Endothelial cell of umbilical vein (primary cell): ENCODE measurements at regions of chr19 and their contacts with region 1.

Region 1: GRCh38 chr19:14031719-14032480 is at the start of gene IL27RA:
- DNase-seq: peak; percentile 40
- H3K4me3 ChIP-seq: peak within 1 kb of the TSS; percentile 58 to 67 (median 61)
- H3K27ac ChIP-seq: no peak within 1 kb of the TSS
- H3K4me1 ChIP-seq: peaks cover 6% of the 10 kb centered on the region
- H3K27me3 ChIP-seq: peaks cover 0 to 7% of the 10 kb centered on the region in 2 experiments
- CTCF ChIP-seq: peak; percentile 48 to 77
- POLR2A ChIP-seq: no peak
- total RNA-seq, gene IL27RA: 3.7 and 4.5 TPM in 2 replicates

Region 2: GRCh38 chr19:13880059-13881043 is 151.5 kb before region 1 on chr19:
- CTCF ChIA-PET with region 1: interaction called, 6 read pairs
- POLR2A ChIA-PET with region 1: no interaction called
- dilution Hi-C with region 1: no loop called
- intact Hi-C with region 1: loop called (anchors 1 kb)
- DNase-seq: peak; percentile 96
- H3K4me3 ChIP-seq: peak overlapping the region in 1 of 3 experiments; percentile 4
- H3K27ac ChIP-seq: peak overlapping the region; percentile 78
- H3K4me1 ChIP-seq: peaks cover 5% of the 10 kb centered on the region
- H3K27me3 ChIP-seq: no peaks in the 10 kb centered on the region
- CTCF ChIP-seq: peak; percentile 100
- POLR2A ChIP-seq: no peak

Region 3: GRCh38 chr19:13952154-13953035 is 79.5 kb before region 1 on chr19 and contains the start of gene DCAF15:
- CTCF ChIA-PET with region 1: interaction called, 13 read pairs
- POLR2A ChIA-PET with region 1: no interaction called
- dilution Hi-C with region 1: no loop called
- intact Hi-C with region 1: loop called (anchors 2 kb)
- DNase-seq: peak; percentile 100
- H3K4me3 ChIP-seq: peak within 1 kb of the TSS; percentile 76 to 87 (median 83)
- H3K27ac ChIP-seq: peak within 1 kb of the TSS; percentile 63
- H3K4me1 ChIP-seq: peaks cover 10% of the 10 kb centered on the region
- H3K27me3 ChIP-seq: no peaks in the 10 kb centered on the region
- CTCF ChIP-seq: no peak
- POLR2A ChIP-seq: peak; percentile 66
- total RNA-seq, gene DCAF15: 42.4 and 47.9 TPM in 2 replicates

Region 4: GRCh38 chr19:13978347-13978733 is 53.6 kb before region 1 on chr19:
- CTCF ChIA-PET with region 1: interaction called, 13 read pairs
- POLR2A ChIA-PET with region 1: no interaction called
- dilution Hi-C with region 1: no loop called
- intact Hi-C with region 1: no loop called
- DNase-seq: peak; percentile 59
- H3K4me3 ChIP-seq: peak overlapping the region in 1 of 3 experiments; percentile 42
- H3K27ac ChIP-seq: no peak overlapping the region
- H3K4me1 ChIP-seq: peaks cover 9% of the 10 kb centered on the region
- H3K27me3 ChIP-seq: no peaks in the 10 kb centered on the region
- CTCF ChIP-seq: no peak
- POLR2A ChIP-seq: no peak

Region 5: DNA sequence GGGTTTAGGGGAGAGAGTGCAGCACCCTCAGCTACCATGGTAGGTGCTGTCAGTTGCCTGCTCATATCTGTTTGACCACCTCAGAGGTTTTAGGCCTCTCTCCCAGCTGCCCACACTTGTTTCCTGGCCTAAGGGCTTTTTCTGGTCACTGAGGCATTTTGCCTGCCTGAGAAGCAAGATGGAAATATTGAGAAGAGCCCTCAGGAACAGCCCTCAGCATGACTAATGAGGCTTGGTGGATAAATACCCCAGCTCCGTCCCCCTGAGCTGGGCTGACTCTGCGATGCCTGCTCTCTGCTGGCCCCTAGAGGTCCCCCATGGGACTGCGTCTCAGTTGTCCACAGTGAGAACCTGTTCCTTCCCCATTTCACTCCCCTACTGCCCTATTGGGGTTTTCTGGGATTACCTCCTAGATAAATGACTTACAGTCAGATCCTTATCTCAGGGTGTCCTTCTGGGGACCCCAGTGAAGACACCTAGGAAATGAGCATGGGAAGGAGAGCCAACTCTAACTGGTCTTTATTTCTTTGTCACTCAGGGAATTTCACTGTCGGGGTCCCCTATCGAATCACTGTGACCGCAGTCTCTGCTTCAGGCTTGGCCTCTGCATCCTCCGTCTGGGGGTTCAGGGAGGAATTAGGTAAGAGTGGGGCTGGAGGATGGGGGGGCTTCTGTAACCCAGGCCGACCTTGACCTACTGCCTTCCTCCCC is 16.7 kb after region 1 on chr19:
- CTCF ChIA-PET with region 1: interaction called, 22 read pairs
- POLR2A ChIA-PET with region 1: interaction called, 4 read pairs
- dilution Hi-C with region 1: no loop called
- intact Hi-C with region 1: no loop called
- DNase-seq: peak; percentile 35
- H3K4me3 ChIP-seq: no peak overlapping the region
- H3K27ac ChIP-seq: no peak overlapping the region
- H3K4me1 ChIP-seq: no peaks in the 10 kb centered on the region
- H3K27me3 ChIP-seq: no peaks in the 10 kb centered on the region
- CTCF ChIP-seq: peak; percentile 83 to 91
- POLR2A ChIP-seq: no peak

Region 6: DNA sequence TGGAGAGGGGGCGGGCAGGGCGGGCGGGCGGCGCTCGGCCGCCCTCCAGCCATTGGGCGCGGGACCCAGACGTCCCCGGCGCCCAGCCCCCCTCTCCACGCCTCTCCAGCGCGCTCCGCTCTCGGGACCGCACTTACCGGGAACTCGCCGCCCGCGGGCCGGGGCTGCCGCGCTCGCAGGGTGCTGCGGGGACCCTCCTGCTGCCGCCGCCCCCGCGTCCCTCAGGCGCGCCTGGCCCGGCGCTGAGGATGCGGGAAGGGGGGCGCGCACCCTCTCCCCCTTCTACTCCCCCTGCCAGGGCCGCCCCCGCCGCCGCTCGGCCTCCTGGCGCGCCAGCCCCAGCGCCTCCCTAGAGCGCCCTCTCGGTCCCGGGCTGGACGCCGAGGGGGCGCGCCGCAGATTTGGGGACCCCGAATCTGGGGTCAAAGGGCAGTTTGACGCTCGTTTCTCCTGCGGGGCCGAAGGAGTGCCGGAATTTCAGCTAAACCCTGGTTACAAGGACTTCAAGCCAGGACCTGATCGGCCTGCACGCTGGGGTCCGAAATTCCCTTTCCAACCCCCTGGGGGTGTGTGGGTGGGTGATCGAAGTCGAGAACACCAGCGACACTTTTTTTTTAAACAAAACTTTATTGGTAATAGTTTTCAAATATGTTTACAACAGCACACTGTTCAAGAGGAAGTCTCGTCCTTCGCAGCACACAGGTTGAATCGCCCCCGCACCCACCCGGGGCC is 59.3 kb after region 1 on chr19:
- CTCF ChIA-PET with region 1: no interaction called
- POLR2A ChIA-PET with region 1: no interaction called
- dilution Hi-C with region 1: no loop called
- intact Hi-C with region 1: no loop called
- DNase-seq: peak; percentile 66
- H3K4me3 ChIP-seq: peak overlapping the region; percentile 52 to 94 (median 86)
- H3K27ac ChIP-seq: peak overlapping the region; percentile 65
- H3K4me1 ChIP-seq: peaks cover 9% of the 10 kb centered on the region
- H3K27me3 ChIP-seq: no peaks in the 10 kb centered on the region
- CTCF ChIP-seq: peak in 1 of 2 donors; percentile 27
- POLR2A ChIP-seq: no peak